Spleen (tissue), 13 donors: ENCODE measurements at regions of chr1 and their contacts with region 1.

Region 1: DNA sequence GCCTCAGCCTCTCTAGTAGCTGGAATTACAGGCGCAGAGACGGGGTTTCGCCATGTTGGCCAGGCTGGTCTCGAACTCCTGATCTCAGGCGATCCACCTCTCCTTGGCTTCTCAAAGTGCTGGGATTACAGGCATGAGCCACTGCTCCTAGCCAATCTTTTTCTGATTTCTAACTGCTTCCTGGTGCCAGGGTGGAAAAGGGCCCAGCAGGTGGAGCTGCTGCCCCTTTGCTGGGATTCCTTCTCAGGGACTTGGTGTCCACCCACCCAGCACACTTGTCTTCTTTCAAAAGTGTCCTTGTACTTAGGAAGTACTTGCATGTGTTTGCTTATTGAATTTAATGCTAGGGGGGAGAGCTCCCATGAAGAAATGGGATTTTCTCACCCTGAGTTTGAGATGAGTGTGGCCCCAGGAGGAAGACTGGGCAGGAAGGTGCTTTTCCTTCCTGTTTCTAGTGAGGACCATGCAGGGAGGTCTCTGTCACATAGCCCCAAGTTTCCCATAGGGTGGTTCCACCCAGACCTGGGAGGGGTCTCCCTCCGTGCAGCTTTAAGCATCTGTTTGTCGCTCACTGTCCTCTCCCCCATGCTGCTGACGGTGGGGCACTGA is 14.2 kb downstream of the UTP11 start:
- DNase-seq: no peak
- H3K4me3 ChIP-seq: no peak overlapping the region
- H3K27ac ChIP-seq: no peak overlapping the region
- H3K4me1 ChIP-seq: peaks cover 18 to 59% (median 48%) of the 10 kb centered on the region in 6 donors
- H3K27me3 ChIP-seq: peaks cover 0 to 8% (median 0%) of the 10 kb centered on the region in 7 donors
- CTCF ChIP-seq: peak; percentile 8 to 77 (median 58)
- POLR2A ChIP-seq: no peak

Region 2: DNA sequence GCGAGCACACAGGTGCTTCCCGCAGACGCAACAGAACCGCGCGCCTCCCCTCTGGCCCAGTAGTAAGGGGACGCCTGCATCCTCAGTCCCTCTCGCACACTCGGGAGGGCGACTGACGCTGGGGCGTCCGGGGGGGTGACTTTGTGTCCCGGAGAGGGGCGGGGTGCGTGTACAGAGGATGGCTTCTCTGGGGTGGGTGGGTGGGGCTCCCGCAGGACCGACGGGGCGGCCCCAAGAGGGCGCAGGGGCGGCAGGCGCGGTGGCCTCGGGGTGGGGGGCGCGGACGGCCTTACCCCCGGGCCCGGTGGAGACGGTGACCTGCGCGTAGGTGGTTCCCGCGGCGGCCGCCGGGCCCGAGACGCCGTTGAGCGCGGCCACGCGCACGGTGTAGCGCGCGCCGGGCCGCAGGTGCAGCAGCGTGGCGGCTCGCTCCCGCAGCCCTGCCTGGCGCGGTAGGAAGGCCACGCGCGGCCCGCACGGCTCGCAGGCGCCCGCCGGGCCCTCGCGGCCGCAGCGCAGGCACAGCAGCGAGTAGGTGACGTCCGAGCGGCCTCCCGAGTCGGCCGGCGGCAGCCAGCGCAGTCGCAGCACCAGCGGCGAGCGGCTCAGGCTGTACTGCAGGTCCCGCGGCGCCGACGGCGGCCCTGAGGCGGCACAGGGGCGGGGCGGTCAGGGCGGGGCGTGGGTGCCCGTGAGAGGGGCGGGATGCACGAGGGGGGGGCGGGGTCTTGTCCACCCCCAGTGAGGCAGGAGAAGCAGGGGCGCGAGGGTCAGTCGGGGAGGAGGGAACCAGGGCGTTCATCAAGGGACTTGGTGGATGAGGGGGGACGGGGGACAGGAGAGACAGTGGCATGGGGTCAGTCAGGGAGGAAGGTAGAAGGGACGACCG is 273.9 kb before region 1 on chr1:
- intact Hi-C with region 1: no loop called
- DNase-seq: no peak
- H3K4me3 ChIP-seq: peak overlapping the region in 7 of 8 donors; percentile 13 to 70 (median 37)
- H3K27ac ChIP-seq: no peak overlapping the region
- H3K4me1 ChIP-seq: peaks cover 0 to 21% (median 12%) of the 10 kb centered on the region in 6 donors
- H3K27me3 ChIP-seq: peaks cover 0 to 99% (median 45%) of the 10 kb centered on the region in 7 donors
- CTCF ChIP-seq: no peak
- POLR2A ChIP-seq: no peak

Region 3: DNA sequence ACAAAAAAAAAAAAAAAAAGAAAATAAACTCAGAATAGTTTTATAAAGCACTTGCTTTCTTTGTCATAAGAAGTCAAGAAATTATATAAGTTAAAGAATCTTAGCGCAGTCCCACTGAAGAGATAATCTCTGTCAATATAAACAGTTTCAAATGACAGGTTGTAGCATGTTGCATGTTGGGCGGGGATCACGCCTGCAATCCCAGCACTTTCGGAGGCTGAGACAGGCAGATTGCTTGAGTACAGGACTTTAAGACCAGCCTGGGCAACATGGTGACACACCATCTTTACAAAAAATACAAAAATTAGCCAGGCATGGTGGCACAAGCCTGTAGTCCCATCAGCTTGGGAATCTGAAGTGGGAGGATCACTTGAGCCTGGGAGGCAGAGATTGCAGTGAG is 61.4 kb before region 1 on chr1:
- intact Hi-C with region 1: no loop called
- DNase-seq: no peak
- H3K4me3 ChIP-seq: no peak overlapping the region
- H3K27ac ChIP-seq: no peak overlapping the region
- H3K4me1 ChIP-seq: no peaks in the 10 kb centered on the region
- H3K27me3 ChIP-seq: no peaks in the 10 kb centered on the region
- CTCF ChIP-seq: no peak
- POLR2A ChIP-seq: no peak

Region 4: DNA sequence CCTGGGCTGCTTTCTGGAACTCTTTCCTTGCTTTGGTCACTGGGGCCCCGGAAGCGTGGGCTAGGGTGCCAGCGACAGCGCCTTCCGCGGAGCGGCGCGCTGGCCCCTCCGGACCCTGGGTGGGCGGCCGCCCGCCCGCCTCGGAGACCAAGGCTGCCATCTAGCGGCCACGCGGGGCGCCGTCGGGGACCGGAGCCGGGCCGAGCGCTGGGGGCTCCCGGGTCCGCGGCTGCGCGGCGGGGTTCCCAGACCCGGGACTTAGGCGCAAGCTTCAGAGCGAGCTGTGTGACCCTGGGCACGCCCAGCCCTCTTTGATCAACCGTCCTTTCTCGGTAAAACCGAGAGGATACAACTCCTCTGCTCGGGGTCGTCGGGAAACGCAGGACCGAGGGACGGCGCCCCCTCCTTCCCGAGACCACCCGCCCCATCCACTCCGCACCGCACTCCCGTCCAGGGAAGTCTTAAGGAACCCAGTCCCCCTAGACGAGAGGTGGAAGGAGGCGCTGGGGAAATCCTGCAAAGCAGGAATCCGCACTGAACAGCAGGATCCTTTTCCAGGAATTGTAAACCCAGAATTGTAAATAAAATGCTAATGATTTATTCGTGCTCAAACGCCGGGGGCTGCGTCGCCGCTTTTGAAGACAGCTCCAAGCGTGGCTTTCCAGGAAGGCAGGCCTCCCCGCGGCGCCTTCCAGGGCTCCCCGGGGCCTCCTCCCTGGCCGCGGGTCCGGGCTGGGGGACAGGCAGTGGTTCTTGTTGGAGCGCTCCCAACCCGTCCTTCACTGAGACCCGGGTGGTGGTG is 791.7 kb after region 1 on chr1:
- intact Hi-C with region 1: loop called (anchors 10 kb)
- DNase-seq: peak; percentile 88
- H3K4me3 ChIP-seq: peak overlapping the region; percentile 16 to 63 (median 29)
- H3K27ac ChIP-seq: peak overlapping the region in 1 of 8 donors; percentile 21
- H3K4me1 ChIP-seq: peaks cover 13 to 40% (median 26%) of the 10 kb centered on the region in 6 donors
- H3K27me3 ChIP-seq: peaks cover 4 to 98% (median 47%) of the 10 kb centered on the region in 7 donors
- CTCF ChIP-seq: peak in 10 of 11 experiments; percentile 8 to 93 (median 82)
- POLR2A ChIP-seq: no peak

Region 5: DNA sequence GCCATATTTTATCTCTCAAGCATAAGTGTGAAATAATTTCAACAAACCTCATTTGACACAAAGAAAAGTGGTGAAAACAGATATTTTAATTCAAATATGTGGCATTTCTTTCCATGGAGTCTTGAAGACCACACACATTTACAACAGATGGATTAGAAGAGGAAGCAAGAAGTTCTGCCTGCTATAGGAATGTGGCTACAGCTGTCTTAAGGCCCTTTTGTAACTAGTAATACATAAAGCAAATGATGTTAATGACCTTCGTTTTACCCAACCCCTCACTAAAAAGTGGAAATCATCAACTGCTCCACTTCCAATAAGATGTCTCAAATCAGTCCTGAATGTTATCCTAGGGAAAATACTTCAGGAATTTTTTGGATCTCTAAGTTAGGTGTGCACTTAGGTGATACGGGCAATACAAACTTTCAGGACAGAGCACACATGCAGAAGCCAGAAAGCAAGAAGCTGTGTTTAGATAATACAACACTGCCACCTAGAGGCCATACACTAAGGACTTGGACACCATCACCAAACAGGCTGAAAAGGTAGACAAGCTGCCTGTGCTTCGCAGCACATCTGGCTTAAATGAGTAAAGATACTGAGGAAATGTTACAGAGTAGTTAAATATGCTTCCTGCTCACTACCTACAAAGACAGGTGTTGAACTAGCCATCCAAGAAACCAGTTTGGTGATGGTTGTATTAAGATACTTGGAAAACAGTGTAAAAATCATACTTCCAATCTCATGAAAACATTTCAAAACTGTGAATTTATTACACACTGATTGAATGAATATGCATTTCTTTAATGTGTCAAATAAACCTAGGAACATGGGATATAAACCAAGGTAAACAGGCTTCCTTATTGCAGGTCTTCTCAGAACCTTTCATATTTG is 808.5 kb after region 1 on chr1:
- intact Hi-C with region 1: loop called (anchors 10 kb)
- DNase-seq: no peak
- H3K4me3 ChIP-seq: no peak overlapping the region
- H3K27ac ChIP-seq: peak overlapping the region in 3 of 8 donors; percentile 60 to 76 (median 68)
- H3K4me1 ChIP-seq: peaks cover 0 to 45% (median 18%) of the 10 kb centered on the region in 6 donors
- H3K27me3 ChIP-seq: peaks cover 0 to 10% (median 0%) of the 10 kb centered on the region in 7 donors
- CTCF ChIP-seq: peak; percentile 45 to 90 (median 80)
- POLR2A ChIP-seq: no peak